ENCODE measurements at regions of chr12 and their contacts with region 1.

Region 1: GRCh38 chr12:57836442-57837375 is 9.8 kb downstream of the CTDSP2 start:
- DNase-seq: peak; percentile 75
- ATAC-seq: peak; percentile 59
- H3K4me3 Mint-ChIP-seq: peak overlapping the region; percentile 51
- H3K27ac Mint-ChIP-seq: peak overlapping the region; percentile 89
- H3K4me1 Mint-ChIP-seq: peaks cover 84% of the 10 kb centered on the region
- H3K27me3 Mint-ChIP-seq: no peaks in the 10 kb centered on the region

Region 2: DNA sequence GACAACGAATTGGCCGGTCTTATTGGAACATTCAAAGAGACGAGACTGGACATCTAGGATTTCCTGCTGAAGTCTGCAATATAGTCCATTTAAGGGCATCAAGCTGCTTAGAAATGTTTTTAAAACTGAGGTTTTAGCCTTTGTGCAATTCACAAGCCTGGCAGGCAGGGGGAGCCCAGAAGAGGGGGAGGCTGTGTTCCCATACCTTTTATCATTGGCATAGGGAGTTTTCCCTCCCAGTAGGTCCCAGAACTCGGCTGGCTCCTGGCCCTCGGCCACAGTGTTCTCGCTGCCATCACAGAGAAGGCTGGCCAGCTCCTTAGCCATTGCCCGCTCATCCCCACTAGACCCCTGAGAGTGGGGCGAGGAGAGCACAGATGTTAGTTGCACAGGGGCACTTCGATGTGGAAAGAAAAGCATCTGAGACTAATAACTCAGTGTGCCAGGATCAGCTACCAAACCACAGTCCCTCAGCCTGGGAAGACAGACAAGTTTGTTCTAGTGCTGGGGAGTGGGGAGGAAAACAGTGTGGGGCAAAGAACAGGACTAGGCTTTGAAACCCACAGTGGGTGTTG is 33.3 kb before region 1 on chr12:
- CTCF ChIA-PET with region 1: interaction called, 11 read pairs
- DNase-seq: peak; percentile 49
- ATAC-seq: no peak
- H3K4me3 Mint-ChIP-seq: no peak overlapping the region
- H3K27ac Mint-ChIP-seq: no peak overlapping the region
- H3K4me1 Mint-ChIP-seq: no peaks in the 10 kb centered on the region
- H3K27me3 Mint-ChIP-seq: no peaks in the 10 kb centered on the region

Region 3: DNA sequence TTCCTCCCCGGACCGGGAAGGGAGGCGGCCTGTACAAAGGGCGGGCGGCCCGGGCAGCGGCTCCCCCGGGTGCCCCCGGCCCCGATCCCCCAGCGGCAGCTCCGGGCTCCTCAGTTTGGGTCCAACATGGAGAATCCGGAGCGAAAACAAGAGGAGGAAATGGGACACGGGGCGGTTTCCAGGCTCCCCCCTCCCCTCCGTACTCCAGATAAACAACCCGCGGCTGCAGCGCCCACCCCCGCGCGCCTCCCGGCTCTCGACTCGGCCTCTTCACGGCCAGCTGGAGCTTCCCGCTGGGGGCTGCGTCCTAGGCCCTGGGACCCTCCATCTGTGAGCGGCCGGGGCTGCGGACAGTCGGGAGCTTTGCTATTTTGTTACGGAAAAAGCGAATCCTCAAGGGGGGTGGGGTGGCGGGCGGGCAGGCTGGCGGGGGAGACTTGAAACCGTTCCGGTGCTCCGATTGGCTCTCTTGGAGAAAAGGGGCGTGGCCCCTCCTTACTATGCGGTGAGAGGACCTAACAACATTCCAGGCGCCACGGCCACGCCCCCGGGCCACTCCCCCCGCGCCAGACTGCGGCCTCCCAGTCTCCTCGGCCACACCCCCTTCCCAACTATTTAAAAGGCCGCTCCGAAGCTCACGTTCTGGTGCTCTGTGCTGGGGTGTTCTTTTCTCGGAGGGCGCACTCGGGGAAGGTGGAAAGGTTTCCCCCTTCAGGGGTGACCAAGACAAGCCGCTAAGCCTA is 10.0 kb after region 1 on chr12 and contains the start of gene CTDSP2:
- CTCF ChIA-PET with region 1: interaction called, 44 read pairs
- DNase-seq: peak; percentile 91
- ATAC-seq: peak; percentile 53
- H3K4me3 Mint-ChIP-seq: peak within 1 kb of the TSS; percentile 74
- H3K27ac Mint-ChIP-seq: peak within 1 kb of the TSS; percentile 65
- H3K4me1 Mint-ChIP-seq: peaks cover 33% of the 10 kb centered on the region
- H3K27me3 Mint-ChIP-seq: peaks cover 26% of the 10 kb centered on the region
- total RNA-seq, gene CTDSP2: 76.2 to 103 TPM

Region 4: DNA sequence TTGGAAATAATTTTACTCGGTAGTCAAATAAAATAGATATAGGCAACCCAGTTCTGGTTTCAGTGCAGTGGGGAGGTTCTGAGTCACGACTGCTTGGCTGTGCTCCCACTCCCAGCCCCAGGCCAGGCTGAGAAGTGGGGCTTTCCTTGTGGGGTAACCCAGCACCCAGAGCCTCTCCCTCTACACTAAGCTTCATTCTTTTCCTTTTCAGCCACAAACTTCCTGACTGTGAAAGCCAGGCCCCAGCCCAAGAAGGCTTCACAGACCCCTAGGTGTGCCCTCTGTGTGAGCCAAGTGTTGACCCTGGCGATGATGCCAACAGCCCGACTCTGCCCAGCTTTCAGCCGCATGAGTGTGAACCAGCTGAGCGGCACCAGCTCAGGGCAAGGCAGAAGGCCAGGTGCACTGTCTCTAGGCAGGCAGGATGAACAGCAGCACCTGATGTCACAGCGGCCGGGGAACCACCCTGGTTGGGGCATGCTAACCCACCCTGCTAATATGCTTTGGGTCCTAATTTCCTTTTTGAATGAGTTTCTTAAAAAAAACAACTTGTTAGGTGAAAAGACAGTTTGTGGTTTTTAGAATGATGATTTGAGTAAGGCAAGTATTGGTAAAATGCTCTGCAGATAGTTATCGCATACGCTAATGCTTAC is 62.4 kb after region 1 on chr12:
- CTCF ChIA-PET with region 1: interaction called, 68 read pairs
- DNase-seq: peak; percentile 92
- ATAC-seq: peak; percentile 90
- H3K4me3 Mint-ChIP-seq: peak overlapping the region; percentile 47
- H3K27ac Mint-ChIP-seq: peak overlapping the region; percentile 98
- H3K4me1 Mint-ChIP-seq: peaks cover 45% of the 10 kb centered on the region
- H3K27me3 Mint-ChIP-seq: peaks cover 17% of the 10 kb centered on the region

Measured in activated CD8-positive, alpha-beta memory T cell treated with anti-CD3 and anti-CD28 coated beads, Interleukin-2, amount 10 ng/mL, durations not matched to agents 7 days and 5 days (primary cell).